H1 (cell line): ENCODE measurements at regions of chr2 and their contacts with region 1.

Region 1: DNA sequence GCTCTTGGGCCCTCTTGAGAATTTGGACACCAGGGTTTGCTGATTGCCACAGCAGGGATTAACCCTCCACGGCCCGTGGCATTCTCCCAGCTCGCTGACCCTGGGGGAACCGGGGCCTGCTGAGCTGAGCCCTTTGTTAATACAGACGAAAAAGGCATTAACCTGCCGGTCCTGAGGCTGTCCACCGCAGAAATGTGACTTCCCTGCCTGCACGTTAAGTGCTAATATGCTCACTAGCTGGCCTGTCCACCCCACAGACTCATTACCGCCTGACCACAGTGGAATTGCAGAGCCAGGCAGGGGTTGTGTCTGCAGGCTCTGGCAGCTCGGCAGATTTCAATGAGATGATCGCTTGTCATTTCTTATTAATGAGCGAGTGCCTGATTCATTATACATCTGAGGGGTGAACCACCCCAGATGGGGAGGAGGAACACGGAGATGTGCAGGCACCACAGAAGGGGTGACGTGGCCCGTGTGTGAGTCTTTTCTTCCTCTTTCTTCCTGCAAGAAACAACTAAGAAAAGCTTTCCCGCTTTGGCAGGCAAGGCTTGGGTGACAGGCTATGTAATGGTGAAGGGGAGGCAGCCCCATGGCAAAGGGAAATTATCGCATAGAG is 126.0 kb downstream of the GLI2 start:
- DNase-seq: no peak
- H3K4me3 ChIP-seq: no peak overlapping the region
- H3K27ac ChIP-seq: no peak overlapping the region
- H3K4me1 ChIP-seq: peaks cover 5 to 42% (median 20%) of the 10 kb centered on the region in 4 experiments
- H3K27me3 ChIP-seq: no peaks in the 10 kb centered on the region
- CTCF ChIP-seq: no peak
- EP300 ChIP-seq: no peak
- POLR2A ChIP-seq: no peak
- RAD21 ChIP-seq: no peak

Region 2: DNA sequence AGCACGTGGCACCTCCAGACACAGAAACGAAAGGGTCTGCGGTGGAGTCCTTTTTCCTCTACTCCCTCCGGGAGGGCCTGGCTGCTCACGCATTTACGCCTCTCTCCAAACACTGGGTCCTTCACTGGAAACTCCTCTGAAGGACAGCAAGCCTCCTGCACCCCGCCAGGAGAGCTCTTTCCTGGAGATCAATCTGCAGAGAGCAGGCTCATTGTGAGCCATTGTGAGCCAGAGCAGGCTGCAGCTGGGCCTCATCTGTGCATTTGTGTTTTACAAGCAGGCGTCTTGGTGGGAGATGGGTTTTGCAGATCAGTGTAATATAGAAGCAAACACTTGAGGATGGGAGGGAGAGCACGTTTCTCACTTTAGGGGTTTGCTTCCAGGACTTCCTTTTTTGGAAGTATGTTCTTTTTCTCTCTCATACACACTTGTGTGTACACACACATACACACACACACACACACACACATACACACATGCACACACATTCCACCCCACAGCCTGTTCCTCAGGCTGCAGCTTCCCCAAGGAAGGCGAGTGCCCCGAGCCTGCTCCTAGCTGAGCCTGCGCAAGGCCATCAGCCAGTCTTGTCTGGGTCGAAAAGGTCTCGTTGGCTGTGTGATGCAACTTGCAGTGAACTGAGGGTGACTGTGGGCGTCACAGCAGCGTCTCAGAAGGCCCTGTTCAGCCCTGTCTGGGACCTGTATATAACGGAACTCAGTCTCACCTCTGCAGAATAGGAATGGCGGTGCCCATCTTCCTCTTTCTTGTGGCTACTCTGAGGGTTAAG is 37.5 kb after region 1 on chr2:
- CTCF ChIA-PET with region 1: interaction called, 12 read pairs
- POLR2A ChIA-PET with region 1: no interaction called
- DNase-seq: no peak
- H3K4me3 ChIP-seq: no peak overlapping the region
- H3K27ac ChIP-seq: no peak overlapping the region; the same call in 1 of the 2 replicates
- H3K4me1 ChIP-seq: peaks cover 18 to 44% (median 28%) of the 10 kb centered on the region in 4 experiments
- H3K27me3 ChIP-seq: no peaks in the 10 kb centered on the region; a peak in 1 of 7 replicates
- CTCF ChIP-seq: no peak
- EP300 ChIP-seq: no peak
- POLR2A ChIP-seq: no peak
- RAD21 ChIP-seq: no peak